ENCODE measurements at regions of chr11 and their contacts with region 1.

Region 1: GRCh38 chr11:78188286-78189173 is at the starts of genes KCTD21 and USP35:
- DNase-seq: peak; percentile 96
- ATAC-seq: peak; percentile 85
- H3K4me3 Mint-ChIP-seq: peak within 1 kb of the TSS; percentile 84
- H3K27ac Mint-ChIP-seq: peak within 1 kb of the TSS; percentile 97
- H3K4me1 Mint-ChIP-seq: peaks cover 57% of the 10 kb centered on the region
- H3K27me3 Mint-ChIP-seq: no peaks in the 10 kb centered on the region
- total RNA-seq, gene KCTD21: 9.0 to 9.8 TPM
- total RNA-seq, gene USP35: 9.2 to 9.8 TPM

Region 2: DNA sequence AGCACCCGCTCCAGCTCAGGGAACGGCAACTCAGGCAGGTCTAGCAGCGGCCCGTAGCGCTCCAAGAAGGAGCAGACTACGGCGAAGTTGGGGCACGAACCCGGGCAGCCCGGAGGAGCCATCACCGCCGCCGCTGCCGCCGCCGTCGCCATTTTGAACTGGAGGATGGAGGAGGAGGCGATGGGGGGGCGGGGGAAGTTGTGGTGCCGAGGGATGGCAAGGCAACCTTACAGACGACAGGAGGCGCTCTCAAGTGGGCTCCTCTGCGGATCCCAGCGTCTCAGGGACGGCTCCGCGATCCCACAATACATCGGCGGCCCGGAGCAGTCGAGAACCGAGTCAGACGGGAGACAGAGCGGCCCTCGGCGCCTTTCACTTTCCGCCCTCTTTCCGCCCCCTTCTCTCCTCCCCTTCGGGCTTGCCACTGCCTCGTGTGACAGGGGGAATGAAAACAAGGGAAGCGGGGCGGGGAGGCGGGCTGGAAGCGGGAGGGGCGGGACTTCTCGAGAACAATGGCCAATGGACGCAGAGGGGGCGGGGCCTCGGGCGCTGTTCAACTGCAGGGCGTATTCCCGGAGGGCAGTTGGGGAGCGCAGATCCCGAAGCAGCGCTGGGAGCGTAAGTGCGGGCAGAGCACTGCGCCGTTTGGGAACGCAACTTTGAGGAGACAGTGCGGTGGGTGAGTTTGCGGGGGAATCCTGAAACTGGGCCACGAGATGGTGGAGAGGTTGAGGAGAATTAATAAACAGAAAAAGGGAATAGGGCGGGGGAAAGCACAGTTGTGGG is 367.8 kb before region 1 on chr11 and contains the starts of genes AAMDC and RSF1:
- CTCF ChIA-PET with region 1: no interaction called
- POLR2A ChIA-PET with region 1: no interaction called
- intact Hi-C with region 1: loop called in 1 of 2 experiments (anchors 1 kb)
- DNase-seq: peak; percentile 99
- ATAC-seq: peak; percentile 88
- H3K4me3 Mint-ChIP-seq: peak within 1 kb of the TSS; percentile 97
- H3K27ac Mint-ChIP-seq: peak within 1 kb of the TSS; percentile 98
- H3K4me1 Mint-ChIP-seq: peaks cover 35% of the 10 kb centered on the region
- H3K27me3 Mint-ChIP-seq: no peaks in the 10 kb centered on the region
- total RNA-seq, gene AAMDC: 4.8 to 5.3 TPM
- total RNA-seq, gene RSF1: 49.9 to 59.2 TPM

Region 3: GRCh38 chr11:78079232-78080083 is 109.1 kb before region 1 on chr11 and contains the start of gene NDUFC2:
- CTCF ChIA-PET with region 1: no interaction called
- POLR2A ChIA-PET with region 1: interaction called, 6 read pairs
- intact Hi-C with region 1: loop called in 1 of 2 experiments (anchors 1 kb)
- DNase-seq: peak; percentile 81
- ATAC-seq: peak; percentile 83
- H3K4me3 Mint-ChIP-seq: peak within 1 kb of the TSS; percentile 91
- H3K27ac Mint-ChIP-seq: peak within 1 kb of the TSS; percentile 90
- H3K4me1 Mint-ChIP-seq: peaks cover 49% of the 10 kb centered on the region
- H3K27me3 Mint-ChIP-seq: no peaks in the 10 kb centered on the region
- total RNA-seq, gene NDUFC2: 214 to 236 TPM

Region 4: DNA sequence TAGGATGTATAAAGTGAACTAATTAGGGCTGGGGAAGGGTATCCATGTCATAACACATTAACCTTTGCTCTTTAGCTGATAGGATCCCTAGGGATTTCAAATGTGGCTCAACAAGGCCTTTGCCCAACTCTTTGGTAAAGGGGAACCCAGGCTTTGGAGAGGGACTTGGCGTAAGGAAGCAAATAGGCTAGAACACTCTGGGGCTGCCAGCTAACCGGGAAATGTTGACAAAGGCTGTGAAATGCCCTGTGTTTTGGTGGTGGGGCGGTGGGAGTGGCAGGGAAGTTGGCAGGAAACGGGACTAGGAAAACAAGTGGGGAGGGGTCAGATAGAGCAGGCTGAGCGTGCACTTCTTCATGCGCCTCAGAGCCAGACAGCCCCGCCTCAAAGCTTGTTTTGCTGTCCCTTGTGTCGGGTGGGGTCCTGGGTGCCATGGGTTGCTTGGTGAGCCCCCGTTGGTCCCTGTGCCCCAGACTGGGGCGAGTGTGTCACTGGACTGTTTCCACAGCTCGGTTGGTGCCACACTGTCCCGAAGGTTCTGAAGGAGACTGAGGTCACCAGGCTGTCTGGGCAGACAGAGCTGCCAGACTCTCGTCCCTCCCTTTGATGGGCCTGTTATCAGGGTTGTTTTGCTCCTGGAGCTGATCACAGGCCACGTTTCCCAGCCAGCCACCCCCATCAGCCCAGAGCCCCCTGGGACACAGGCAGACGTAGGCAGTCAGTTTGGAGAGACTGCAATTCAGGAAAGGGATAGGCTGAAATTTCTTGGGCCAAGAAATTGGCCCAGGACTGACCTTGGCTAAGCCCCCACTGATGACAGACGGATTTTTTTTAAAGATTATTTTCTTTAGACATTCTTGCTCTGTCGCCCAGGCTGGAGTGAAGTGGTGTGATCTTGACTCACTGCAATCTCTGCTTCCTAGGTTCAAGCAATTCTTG is 19.7 kb before region 1 on chr11:
- CTCF ChIA-PET with region 1: no interaction called
- POLR2A ChIA-PET with region 1: no interaction called
- intact Hi-C with region 1: no loop called
- DNase-seq: no peak
- ATAC-seq: no peak
- H3K4me3 Mint-ChIP-seq: no peak overlapping the region
- H3K27ac Mint-ChIP-seq: peak overlapping the region; percentile 14
- H3K4me1 Mint-ChIP-seq: no peaks in the 10 kb centered on the region
- H3K27me3 Mint-ChIP-seq: no peaks in the 10 kb centered on the region

Region 5: DNA sequence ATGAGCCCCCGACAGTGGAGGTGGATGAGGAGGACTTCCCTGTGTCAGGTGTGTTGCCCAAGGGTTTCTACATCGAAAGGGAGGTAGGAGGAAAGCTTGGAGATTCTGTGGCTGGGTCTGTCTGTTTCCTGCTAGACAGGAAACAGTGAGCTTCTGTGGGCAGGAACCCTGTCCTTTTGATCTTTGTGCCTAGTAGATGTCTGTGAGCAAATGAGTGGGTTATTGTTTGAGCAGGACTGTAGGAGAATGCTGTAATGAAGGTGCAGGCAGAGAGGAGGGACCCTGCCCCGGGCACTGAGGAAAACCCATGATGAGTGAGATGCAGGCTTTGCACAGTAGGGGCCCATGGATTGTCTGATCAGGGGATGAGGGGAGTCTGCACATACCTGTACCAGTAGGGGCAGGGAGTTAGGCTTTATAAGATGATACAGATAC is 14.2 kb after region 1 on chr11:
- CTCF ChIA-PET with region 1: interaction called, 9 read pairs
- POLR2A ChIA-PET with region 1: interaction called, 6 read pairs
- intact Hi-C with region 1: loop called (anchors 1 to 2 kb)
- DNase-seq: peak; percentile 61
- ATAC-seq: peak; percentile 89
- H3K4me3 Mint-ChIP-seq: peak overlapping the region; percentile 47
- H3K27ac Mint-ChIP-seq: peak overlapping the region; percentile 93
- H3K4me1 Mint-ChIP-seq: peaks cover 43% of the 10 kb centered on the region
- H3K27me3 Mint-ChIP-seq: no peaks in the 10 kb centered on the region

Region 6: DNA sequence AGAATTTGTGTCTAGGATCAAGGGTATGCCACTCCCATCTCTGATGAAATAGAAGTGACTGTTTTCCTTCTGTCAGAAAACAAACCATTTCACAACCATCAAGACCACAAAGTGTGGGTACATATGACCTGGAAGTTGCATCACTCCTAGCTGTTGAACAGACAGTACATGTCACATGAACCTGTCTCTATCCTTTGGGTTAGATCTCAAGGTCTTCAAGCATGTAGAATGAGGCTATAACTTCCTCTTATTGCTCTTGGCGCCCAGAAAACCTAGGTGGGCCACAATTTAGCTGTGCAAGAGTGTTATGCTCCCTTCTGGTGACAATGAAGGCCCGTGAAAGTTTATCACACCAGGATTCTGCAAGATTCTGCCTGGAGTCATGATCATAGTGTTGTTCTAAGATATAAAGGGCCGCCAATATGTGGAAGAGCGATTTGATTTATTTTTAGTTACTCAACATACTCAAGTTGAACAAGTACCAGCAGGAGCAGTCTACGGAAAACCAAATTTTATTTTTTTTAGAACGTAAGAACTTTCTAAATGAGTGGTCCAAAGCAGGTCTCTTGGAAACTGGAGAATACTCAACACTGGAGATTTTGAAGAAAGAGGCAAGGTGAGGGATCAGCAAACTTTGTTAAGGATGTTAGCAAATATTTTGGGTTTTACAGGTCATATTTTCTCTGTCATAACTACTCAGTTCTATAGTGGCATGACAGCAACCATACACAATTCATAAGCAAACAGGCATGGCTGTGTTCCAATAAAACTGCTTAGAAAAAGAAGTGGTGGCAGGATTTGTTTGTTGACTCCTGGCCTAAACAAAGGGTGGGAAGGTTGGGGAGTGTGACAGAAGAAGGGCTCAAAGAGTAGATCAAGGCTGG is 102.0 kb after region 1 on chr11:
- CTCF ChIA-PET with region 1: no interaction called
- POLR2A ChIA-PET with region 1: interaction called, 3 read pairs
- intact Hi-C with region 1: loop called in 1 of 2 experiments (anchors 5 kb)
- DNase-seq: peak; percentile 43
- ATAC-seq: peak; percentile 54
- H3K4me3 Mint-ChIP-seq: no peak overlapping the region
- H3K27ac Mint-ChIP-seq: peak overlapping the region; percentile 85
- H3K4me1 Mint-ChIP-seq: peaks cover 33% of the 10 kb centered on the region
- H3K27me3 Mint-ChIP-seq: no peaks in the 10 kb centered on the region

Region 7: DNA sequence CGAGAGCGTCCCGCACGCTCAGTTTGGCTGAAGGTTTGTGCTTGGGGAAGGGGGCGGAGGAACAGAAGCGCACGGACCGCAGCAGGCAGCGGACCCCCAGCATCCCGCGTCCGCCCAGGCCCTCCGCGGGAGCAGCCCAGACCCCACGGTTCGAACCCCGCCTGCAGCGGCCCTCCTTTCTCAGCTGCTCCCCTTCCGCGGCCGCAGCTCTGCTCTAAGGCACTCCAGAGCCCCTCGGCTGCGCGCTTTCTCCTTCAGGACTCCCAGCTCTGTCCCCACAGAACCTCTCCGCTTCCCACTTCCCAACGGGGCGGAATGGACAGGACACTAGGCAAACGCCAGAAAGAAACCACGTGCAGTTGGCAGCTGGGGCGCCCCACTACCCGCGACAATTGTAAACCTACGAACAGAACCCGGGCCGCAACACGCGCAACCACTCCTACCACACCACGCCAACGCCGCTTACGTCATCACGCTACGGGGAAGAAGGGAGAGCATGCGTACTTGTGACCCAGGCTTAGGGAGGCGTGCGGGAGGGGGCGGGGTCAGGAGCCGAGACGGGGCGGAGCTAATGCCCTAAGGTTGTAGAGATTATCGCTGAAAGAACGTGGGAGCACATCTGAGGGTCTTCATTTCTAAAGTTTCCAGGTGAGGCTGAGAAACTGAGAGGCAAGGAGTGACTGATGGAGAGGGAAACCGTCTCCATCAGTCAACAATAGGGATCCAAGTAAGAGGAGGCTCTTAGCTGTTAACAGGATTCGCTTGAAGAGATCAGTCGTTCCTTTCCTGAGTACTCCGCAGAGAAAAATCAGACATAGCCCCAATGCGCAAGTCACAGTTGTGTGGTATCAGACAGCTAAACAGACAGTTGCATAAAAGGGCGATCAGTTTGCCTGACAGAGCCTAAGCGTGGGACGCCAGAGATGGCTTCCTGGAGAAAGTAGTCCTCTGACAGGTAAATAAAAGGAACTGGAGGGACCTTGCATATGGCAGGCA is 386.2 kb after region 1 on chr11 and contains the start of gene NARS2:
- CTCF ChIA-PET with region 1: no interaction called
- POLR2A ChIA-PET with region 1: no interaction called
- intact Hi-C with region 1: loop called in 1 of 2 experiments (anchors 1 kb)
- DNase-seq: peak; percentile 100
- ATAC-seq: peak; percentile 99
- H3K4me3 Mint-ChIP-seq: peak within 1 kb of the TSS; percentile 97
- H3K27ac Mint-ChIP-seq: peak within 1 kb of the TSS; percentile 89
- H3K4me1 Mint-ChIP-seq: peaks cover 28% of the 10 kb centered on the region
- H3K27me3 Mint-ChIP-seq: no peaks in the 10 kb centered on the region
- total RNA-seq, gene NARS2: 22.9 to 33.4 TPM

Measured in activated CD4-positive, alpha-beta T cell treated with anti-CD3 and anti-CD28 coated beads for 36 hours (primary cell).